K562 (cell line): ENCODE measurements at regions of chr2 and their contacts with region 1.

Region 1: GRCh38 chr2:84077492-84077891 is 381.6 kb downstream of the SUCLG1 start:
- DNase-seq: peak; percentile 23 to 53 (median 29)
- ATAC-seq: peak; percentile 83
- H3K4me3 ChIP-seq: no peak overlapping the region
- H3K27ac ChIP-seq: no peak overlapping the region
- H3K4me1 ChIP-seq: peaks cover 0 to 2% of the 10 kb centered on the region in 2 experiments; a peak in 2 of 5 replicates
- H3K27me3 ChIP-seq: no peaks in the 10 kb centered on the region; a peak in 2 of 5 replicates
- CTCF ChIP-seq: peak; percentile 37 to 69 (median 55); a peak in 5 of 6 replicates
- EP300 ChIP-seq: no peak
- POLR2A ChIP-seq: no peak
- RAD21 ChIP-seq: peak; percentile 43 to 63

Region 2: GRCh38 chr2:83827618-83828017 is 249.9 kb before region 1 on chr2:
- CTCF ChIA-PET with region 1: interaction called, 4 read pairs
- POLR2A ChIA-PET with region 1: no interaction called
- in situ Hi-C with region 1: no loop called
- intact Hi-C with region 1: loop called (anchors 2 kb)
- DNase-seq: peak in 1 of 4 experiments; percentile 5
- ATAC-seq: no peak
- H3K4me3 ChIP-seq: no peak overlapping the region
- H3K27ac ChIP-seq: no peak overlapping the region
- H3K4me1 ChIP-seq: no peaks in the 10 kb centered on the region; a peak in 1 of 5 replicates
- H3K27me3 ChIP-seq: no peaks in the 10 kb centered on the region
- CTCF ChIP-seq: peak; percentile 31 to 56 (median 34); a peak in 4 of 6 replicates
- EP300 ChIP-seq: no peak
- POLR2A ChIP-seq: no peak
- RAD21 ChIP-seq: peak; percentile 17 to 44; a peak in 2 of 4 replicates

Region 3: GRCh38 chr2:83874712-83875430 is 202.6 kb before region 1 on chr2:
- CTCF ChIA-PET with region 1: no interaction called
- POLR2A ChIA-PET with region 1: no interaction called
- in situ Hi-C with region 1: no loop called
- intact Hi-C with region 1: loop called (anchors 5 kb)
- DNase-seq: no peak
- ATAC-seq: no peak
- H3K4me3 ChIP-seq: no peak overlapping the region
- H3K27ac ChIP-seq: no peak overlapping the region
- H3K4me1 ChIP-seq: no peaks in the 10 kb centered on the region
- H3K27me3 ChIP-seq: no peaks in the 10 kb centered on the region
- CTCF ChIP-seq: no peak
- EP300 ChIP-seq: no peak
- POLR2A ChIP-seq: no peak
- RAD21 ChIP-seq: no peak

Region 4: DNA sequence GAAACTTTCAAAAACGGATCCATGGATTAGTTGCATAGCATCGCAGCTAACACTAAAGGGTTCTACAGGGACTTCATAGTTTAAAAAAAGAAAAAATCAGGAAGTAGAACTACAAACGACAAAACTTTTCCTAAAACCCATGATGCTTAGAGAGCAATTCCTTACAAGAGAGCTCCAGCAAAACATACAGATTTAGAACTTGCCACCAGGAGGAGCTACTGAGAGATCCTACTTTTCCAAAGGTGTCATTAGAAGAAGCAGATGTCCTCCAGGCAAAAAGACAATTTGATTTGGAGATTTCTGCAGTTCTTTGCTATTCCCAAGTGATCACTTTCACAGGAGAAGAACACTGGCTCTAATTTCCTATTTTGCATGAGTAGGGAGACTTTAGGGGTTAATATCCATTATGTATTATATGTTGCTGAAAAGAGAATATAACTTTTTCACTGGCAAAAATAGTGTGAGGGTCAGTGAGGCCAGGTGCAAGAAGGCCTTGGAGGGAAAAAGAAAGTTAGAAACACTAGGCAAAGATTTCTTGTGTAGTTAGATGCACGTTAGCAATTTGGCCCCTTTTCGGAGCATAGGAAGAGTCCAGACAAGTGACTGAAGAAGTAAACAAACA is 54.6 kb before region 1 on chr2:
- CTCF ChIA-PET with region 1: interaction called, 3 read pairs
- POLR2A ChIA-PET with region 1: no interaction called
- in situ Hi-C with region 1: no loop called
- intact Hi-C with region 1: loop called (anchors 2 kb)
- DNase-seq: peak; percentile 42 to 75 (median 55)
- ATAC-seq: peak; percentile 86
- H3K4me3 ChIP-seq: no peak overlapping the region
- H3K27ac ChIP-seq: no peak overlapping the region
- H3K4me1 ChIP-seq: no peaks in the 10 kb centered on the region
- H3K27me3 ChIP-seq: no peaks in the 10 kb centered on the region
- CTCF ChIP-seq: peak; percentile 55 to 75 (median 74); a peak in 5 of 6 replicates
- EP300 ChIP-seq: no peak
- POLR2A ChIP-seq: no peak
- RAD21 ChIP-seq: peak; percentile 49 to 59

Region 5: DNA sequence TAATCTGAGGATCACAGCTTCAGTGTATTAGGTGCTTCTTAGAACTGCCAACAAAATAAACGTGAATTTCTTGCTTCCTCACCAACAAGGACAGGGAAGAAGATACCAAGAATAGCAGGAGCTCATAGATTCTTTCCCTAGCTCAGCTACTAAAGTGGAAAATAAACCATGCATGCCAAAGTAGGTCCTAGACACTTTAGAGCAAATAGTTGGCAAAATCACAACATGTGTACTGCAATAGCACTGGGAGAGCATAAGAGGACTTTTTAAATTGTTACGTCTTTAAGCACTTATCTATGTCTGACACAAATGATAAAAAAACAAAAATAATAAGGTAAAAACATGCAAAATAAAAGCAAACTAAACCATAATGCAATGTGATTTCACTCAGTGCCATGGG is 332.0 kb after region 1 on chr2:
- CTCF ChIA-PET with region 1: no interaction called
- POLR2A ChIA-PET with region 1: no interaction called
- in situ Hi-C with region 1: no loop called
- intact Hi-C with region 1: no loop called
- DNase-seq: no peak
- ATAC-seq: no peak
- H3K4me3 ChIP-seq: no peak overlapping the region
- H3K27ac ChIP-seq: no peak overlapping the region
- H3K4me1 ChIP-seq: no peaks in the 10 kb centered on the region
- H3K27me3 ChIP-seq: no peaks in the 10 kb centered on the region; a peak in 1 of 5 replicates
- CTCF ChIP-seq: no peak
- EP300 ChIP-seq: no peak
- POLR2A ChIP-seq: no peak
- RAD21 ChIP-seq: no peak